Caco-2 (cell line): ENCODE measurements at regions of chr14 and their contacts with region 1.

Region 1: DNA sequence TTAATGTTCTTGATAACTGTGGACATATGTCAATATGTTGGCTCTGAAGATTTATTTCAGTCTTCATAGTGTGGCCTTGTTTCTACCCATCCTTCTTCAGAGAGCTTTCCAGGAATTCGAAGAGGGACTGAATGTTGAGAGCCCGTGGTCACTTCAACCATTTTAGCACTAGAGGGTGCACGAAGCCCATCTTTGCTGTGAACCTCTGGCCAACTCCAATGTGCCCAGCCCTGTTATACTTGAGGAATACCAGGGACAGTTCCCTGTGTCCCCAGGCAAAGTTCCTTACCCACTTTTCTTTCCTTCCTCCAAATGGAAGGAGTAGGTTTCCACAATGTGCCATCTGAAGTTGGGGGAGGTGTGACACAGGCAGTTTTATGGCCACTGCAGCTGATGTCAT is 603.5 kb downstream of the RPL10L start:
- DNase-seq: peak; percentile 49 to 53
- H3K4me3 ChIP-seq: no peak overlapping the region
- H3K4me3 Mint-ChIP-seq: no peak overlapping the region
- H3K27ac Mint-ChIP-seq: no peak overlapping the region
- H3K4me1 ChIP-seq: no peaks in the 10 kb centered on the region
- H3K4me1 Mint-ChIP-seq: no peaks in the 10 kb centered on the region
- H3K27me3 ChIP-seq: no peaks in the 10 kb centered on the region
- H3K27me3 Mint-ChIP-seq: peaks cover 4% of the 10 kb centered on the region
- CTCF ChIP-seq: peak; percentile 52 to 61

Region 2: DNA sequence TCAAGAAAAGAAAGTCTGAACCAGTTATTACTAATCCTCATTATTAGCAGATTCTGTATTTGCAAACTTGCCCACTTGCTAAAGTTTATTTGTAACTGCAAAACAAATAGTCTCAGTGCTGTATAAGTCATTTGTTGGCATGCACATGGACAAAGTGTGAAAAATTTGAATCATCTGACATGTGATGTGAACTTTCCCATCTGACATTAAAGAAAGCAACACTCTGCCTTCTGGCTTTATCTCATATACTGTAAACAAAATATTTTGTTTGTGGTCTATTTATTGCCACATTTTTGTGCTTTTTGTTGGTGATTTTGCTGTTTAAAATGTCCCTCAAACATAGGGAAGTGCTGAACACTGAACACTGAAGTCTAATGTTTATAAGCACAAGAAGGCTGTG is 89.7 kb after region 1 on chr14:
- CTCF ChIA-PET with region 1: no interaction called
- POLR2A ChIA-PET with region 1: no interaction called
- intact Hi-C with region 1: no loop called
- DNase-seq: no peak
- H3K4me3 ChIP-seq: no peak overlapping the region
- H3K4me3 Mint-ChIP-seq: no peak overlapping the region
- H3K27ac Mint-ChIP-seq: no peak overlapping the region
- H3K4me1 ChIP-seq: no peaks in the 10 kb centered on the region
- H3K4me1 Mint-ChIP-seq: no peaks in the 10 kb centered on the region
- H3K27me3 ChIP-seq: no peaks in the 10 kb centered on the region
- H3K27me3 Mint-ChIP-seq: peaks cover 11% of the 10 kb centered on the region
- CTCF ChIP-seq: no peak

Region 3: DNA sequence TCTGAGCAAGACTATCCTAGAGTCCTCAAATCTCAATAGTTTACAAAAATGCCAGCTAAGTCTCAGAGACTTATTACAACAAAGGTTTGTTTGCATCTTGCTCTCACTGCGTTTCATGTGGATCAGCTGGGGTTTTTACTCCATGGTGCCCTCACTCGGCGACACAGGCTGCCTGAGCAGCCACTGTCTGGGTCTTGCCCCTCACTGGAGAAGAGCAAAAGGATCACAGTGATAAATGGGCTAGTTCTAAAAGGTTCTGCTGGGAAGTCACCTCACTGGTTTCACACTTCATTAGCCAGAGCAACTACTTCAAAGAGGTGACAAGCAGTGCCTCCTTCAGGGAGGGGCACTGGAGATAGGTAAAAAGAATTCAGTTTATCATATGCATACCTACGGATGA is 211.4 kb after region 1 on chr14:
- CTCF ChIA-PET with region 1: no interaction called
- POLR2A ChIA-PET with region 1: no interaction called
- intact Hi-C with region 1: loop called (anchors 1 kb)
- DNase-seq: peak in 1 of 2 experiments; percentile 5
- H3K4me3 ChIP-seq: no peak overlapping the region
- H3K4me3 Mint-ChIP-seq: no peak overlapping the region
- H3K27ac Mint-ChIP-seq: no peak overlapping the region
- H3K4me1 ChIP-seq: no peaks in the 10 kb centered on the region
- H3K4me1 Mint-ChIP-seq: no peaks in the 10 kb centered on the region
- H3K27me3 ChIP-seq: no peaks in the 10 kb centered on the region
- H3K27me3 Mint-ChIP-seq: peaks cover 4% of the 10 kb centered on the region
- CTCF ChIP-seq: peak in 1 of 2 experiments; percentile 40